Aorta (tissue), 5 donors: ENCODE measurements at regions of chr1 and their contacts with region 1.

Region 1: GRCh38 chr1:6646499-6647148 is 22.0 kb downstream of the THAP3 start:
- DNase-seq: no peak
- ATAC-seq: peak; percentile 72
- H3K4me3 ChIP-seq: no peak overlapping the region
- H3K27ac ChIP-seq: no peak overlapping the region
- H3K4me1 ChIP-seq: no peaks in the 10 kb centered on the region
- H3K27me3 ChIP-seq: no peaks in the 10 kb centered on the region

Region 2: GRCh38 chr1:6554031-6554906 is 92.4 kb before region 1 on chr1 and contains the start of gene NOL9:
- intact Hi-C with region 1: loop called (anchors 2 to 10 kb)
- DNase-seq: peak; percentile 97 to 99
- ATAC-seq: peak; percentile 99
- H3K4me3 ChIP-seq: peak within 1 kb of the TSS; percentile 82 to 85
- H3K27ac ChIP-seq: peak within 1 kb of the TSS in 1 of 2 donors; percentile 50
- H3K4me1 ChIP-seq: peaks cover 0 to 3% of the 10 kb centered on the region in 2 donors
- H3K27me3 ChIP-seq: no peaks in the 10 kb centered on the region
- total RNA-seq, gene NOL9: 25.9 to 27.0 TPM

Region 3: DNA sequence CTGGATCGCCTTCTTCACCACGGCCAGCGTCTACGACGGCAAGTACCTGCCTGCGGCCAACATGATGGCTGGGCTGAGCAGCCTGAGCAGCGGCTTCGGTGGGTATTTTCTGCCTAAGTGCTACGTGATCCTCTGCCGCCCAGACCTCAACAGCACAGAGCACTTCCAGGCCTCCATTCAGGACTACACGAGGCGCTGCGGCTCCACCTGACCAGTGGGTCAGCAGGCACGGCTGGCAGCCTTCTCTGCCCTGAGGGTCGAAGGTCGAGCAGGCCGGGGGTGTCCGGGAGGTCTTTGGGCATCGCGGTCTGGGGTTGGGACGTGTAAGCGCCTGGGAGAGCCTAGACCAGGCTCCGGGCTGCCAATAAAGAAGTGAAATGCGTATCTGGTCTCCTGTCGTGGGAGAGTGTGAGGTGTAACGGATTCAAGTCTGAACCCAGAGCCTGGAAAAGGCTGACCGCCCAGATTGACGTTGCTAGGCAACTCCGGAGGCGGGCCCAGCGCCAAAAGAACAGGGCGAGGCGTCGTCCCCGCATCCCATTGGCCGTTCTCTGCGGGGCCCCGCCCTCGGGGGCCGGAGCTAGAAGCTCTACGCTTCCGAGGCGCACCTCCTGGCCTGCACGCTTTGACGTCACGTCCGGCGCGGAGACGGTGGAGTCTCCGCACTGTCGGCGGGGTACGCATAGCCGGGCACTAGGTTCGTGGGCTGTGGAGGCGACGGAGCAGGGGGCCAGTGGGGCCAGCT is 67.1 kb before region 1 on chr1 and contains the start of gene ZBTB48:
- intact Hi-C with region 1: no loop called
- DNase-seq: peak; percentile 100
- ATAC-seq: peak; percentile 98
- H3K4me3 ChIP-seq: peak within 1 kb of the TSS; percentile 19 to 64
- H3K27ac ChIP-seq: peak within 1 kb of the TSS in 1 of 2 donors; percentile 86
- H3K4me1 ChIP-seq: no peaks in the 10 kb centered on the region
- H3K27me3 ChIP-seq: no peaks in the 10 kb centered on the region
- total RNA-seq, gene ZBTB48: 20.6 to 29.9 TPM